ENCODE measurements at regions of chr13 and their contacts with region 1.

Region 1: GRCh38 chr13:29935309-29935981 is 85.0 kb upstream of the UBL3 start:
- H3K4me3 Mint-ChIP-seq: peak overlapping the region; percentile 67
- H3K27ac Mint-ChIP-seq: peak overlapping the region; percentile 53
- H3K4me1 Mint-ChIP-seq: peaks cover 22% of the 10 kb centered on the region
- H3K27me3 Mint-ChIP-seq: peaks cover 12% of the 10 kb centered on the region

Region 2: DNA sequence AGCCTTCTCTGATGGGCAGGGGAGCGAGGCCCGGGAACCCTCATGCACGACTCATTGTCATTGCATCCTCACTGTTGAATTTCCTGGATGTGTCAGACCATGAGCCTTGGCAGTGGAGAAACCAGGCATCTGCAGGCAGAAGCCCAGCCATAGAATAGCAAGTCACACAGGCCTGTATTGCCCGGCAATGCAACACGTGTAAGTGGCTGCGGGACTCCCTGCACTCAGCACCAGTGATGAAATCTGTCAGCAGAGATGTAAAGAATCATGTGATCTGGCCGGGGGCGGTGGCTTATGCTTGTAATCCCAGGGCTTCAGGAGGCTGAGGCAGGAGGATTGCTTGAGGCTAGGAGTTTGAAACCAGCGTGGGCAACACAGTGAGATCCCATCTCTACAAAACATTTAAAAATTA is 172.1 kb after region 1 on chr13:
- intact Hi-C with region 1: loop called (anchors 5 kb)
- H3K4me3 Mint-ChIP-seq: no peak overlapping the region
- H3K27ac Mint-ChIP-seq: peak overlapping the region; percentile 82
- H3K4me1 Mint-ChIP-seq: peaks cover 70% of the 10 kb centered on the region
- H3K27me3 Mint-ChIP-seq: peaks cover 17% of the 10 kb centered on the region

Measured in dendritic cell treated with granulocyte-macrophage colony-stimulating factor and Interleukin-4, amounts not matched to agents 40 ng/mL and 50 ng/mL, for 4 days (primary cell).